ENCODE measurements at regions of chr16 and their contacts with region 1.

Region 1: GRCh38 chr16:788394-789126 is at the start of gene CHTF18:
- DNase-seq: peak; percentile 90 to 95 (median 95)
- ATAC-seq: peak; percentile 98
- H3K4me3 ChIP-seq: peak within 1 kb of the TSS; percentile 74
- H3K4me3 Mint-ChIP-seq: peak within 1 kb of the TSS; percentile 78 to 90 (median 86)
- H3K27ac ChIP-seq: peak within 1 kb of the TSS; percentile 83
- H3K27ac Mint-ChIP-seq: peak within 1 kb of the TSS in 6 of 9 donors; percentile 53 to 89 (median 78)
- H3K4me1 ChIP-seq: peaks cover 5 to 8% of the 10 kb centered on the region in 2 donors
- H3K4me1 Mint-ChIP-seq: peaks cover 0 to 14% (median 5%) of the 10 kb centered on the region in 7 donors
- H3K27me3 ChIP-seq: no peaks in the 10 kb centered on the region
- H3K27me3 Mint-ChIP-seq: no peaks in the 10 kb centered on the region
- total RNA-seq, gene CHTF18: 32.0 to 74.8 (median 51.7) TPM

Region 2: GRCh38 chr16:807347-808084 is 19.0 kb after region 1 on chr16:
- CTCF ChIA-PET with region 1: interaction called, 4 read pairs
- POLR2A ChIA-PET with region 1: interaction called, 4 read pairs
- intact Hi-C with region 1: loop called (anchors 1 kb)
- DNase-seq: peak; percentile 53 to 89 (median 68)
- ATAC-seq: peak; percentile 95
- H3K4me3 ChIP-seq: peak overlapping the region; percentile 92
- H3K4me3 Mint-ChIP-seq: peak overlapping the region; percentile 92 to 100 (median 95)
- H3K27ac ChIP-seq: peak overlapping the region; percentile 88
- H3K27ac Mint-ChIP-seq: peak overlapping the region; percentile 92 to 98 (median 97)
- H3K4me1 ChIP-seq: peaks cover 0 to 9% of the 10 kb centered on the region in 2 donors
- H3K4me1 Mint-ChIP-seq: peaks cover 0 to 16% (median 12%) of the 10 kb centered on the region in 7 donors
- H3K27me3 ChIP-seq: no peaks in the 10 kb centered on the region
- H3K27me3 Mint-ChIP-seq: peaks cover 0 to 15% (median 5%) of the 10 kb centered on the region in 5 donors

Region 3: DNA sequence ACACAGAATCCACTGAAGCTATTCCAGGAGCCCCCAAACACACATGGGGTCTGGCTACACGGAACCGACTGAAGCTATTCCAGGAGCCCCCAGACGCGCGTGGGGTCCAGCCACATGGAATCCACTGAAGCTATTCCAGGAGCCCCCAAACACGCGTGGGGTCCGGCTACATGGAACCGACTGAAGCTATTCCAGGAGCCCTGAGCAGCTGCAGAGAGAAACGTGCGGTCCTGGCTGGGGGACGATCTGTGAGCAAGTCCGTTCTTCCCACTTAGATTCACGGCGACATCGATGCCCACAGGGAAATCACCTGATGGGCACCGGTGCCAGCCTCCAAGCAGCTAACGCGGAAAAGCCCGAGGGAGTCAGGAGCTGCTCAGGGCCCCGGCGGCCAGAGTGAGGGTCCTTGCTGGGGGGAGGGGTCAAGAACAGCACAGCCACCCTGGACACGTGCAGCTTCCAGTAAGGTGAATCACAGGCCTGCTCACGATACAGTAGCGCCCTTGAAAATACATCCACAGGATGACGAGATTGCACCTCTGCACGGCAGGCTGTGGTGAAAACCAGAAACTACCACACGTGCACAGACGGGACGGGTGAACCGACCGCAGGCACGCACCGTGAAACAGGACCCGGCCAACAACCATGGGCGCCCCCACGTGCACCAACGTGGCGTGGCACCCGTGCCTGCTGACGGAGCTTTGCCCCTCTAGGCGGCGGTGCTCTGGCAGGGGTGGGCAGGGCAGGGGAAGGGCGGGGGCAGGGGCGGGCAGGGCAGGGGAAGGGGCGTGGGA is 89.6 kb after region 1 on chr16:
- CTCF ChIA-PET with region 1: no interaction called
- POLR2A ChIA-PET with region 1: no interaction called
- intact Hi-C with region 1: no loop called
- DNase-seq: peak in 1 of 9 donors; percentile 8
- ATAC-seq: no peak
- H3K4me3 ChIP-seq: no peak overlapping the region
- H3K4me3 Mint-ChIP-seq: no peak overlapping the region
- H3K27ac ChIP-seq: no peak overlapping the region
- H3K27ac Mint-ChIP-seq: no peak overlapping the region
- H3K4me1 ChIP-seq: no peaks in the 10 kb centered on the region
- H3K4me1 Mint-ChIP-seq: peaks cover 0 to 2% (median 0%) of the 10 kb centered on the region in 7 donors
- H3K27me3 ChIP-seq: no peaks in the 10 kb centered on the region
- H3K27me3 Mint-ChIP-seq: no peaks in the 10 kb centered on the region